Activated T-helper 1 cell treated with anti-CD3 and anti-CD28 coated beads, Interleukin-12 subunit alpha, Interleukin-12 subunit beta, Interleukin-2, Interleukin-4 antibody, amounts not matched to agents 30 ng/mL and 10 ng/mL and 1 ng/mL, durations not matched to agents 14 hours and 24 hours and 36 hours (primary cell): ENCODE measurements at regions of chr10 and their contacts with region 1.

Region 1: DNA sequence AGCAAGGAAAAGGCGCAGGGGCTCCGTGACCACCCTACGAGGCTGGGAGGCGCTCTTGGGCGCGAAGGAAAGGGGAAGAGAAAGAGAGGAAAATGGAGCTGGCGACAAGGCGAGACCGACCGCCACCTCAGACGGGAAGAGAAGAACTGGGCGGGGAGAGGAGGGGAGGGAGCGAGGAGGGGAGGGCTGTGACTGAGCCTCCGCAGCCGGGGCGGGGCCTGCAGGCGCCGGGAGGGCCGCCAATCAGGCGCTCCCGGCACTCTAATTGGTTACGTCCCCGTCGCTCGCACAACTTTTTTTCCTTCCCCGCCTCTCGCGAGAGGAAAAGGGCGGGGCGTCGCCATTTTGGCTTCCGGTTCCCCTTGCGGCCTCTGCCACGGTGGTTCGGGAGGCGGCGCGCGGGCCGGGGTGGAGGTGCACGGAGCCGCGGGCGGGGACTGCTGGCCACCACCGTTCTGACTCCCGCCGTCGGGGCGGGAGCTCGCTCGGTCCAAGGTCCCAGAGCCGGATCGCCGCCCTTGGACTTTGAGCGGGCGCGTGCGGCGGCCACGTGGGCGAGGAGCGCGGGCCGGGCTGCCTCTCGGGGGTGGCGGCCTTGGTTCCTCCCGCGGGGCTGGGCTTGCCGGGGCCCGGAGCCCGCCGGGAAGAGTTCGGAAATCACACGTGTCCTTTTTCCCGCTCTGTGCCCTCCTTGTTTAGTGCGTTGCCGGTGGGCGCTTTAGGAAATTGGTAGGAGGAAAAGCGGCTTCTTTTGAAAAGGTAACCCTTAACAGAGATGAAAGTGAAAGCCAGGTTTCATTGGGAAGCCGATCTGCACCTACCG is at the start of gene GDI2:
- DNase-seq: peak; percentile 97
- H3K4me3 Mint-ChIP-seq: peak within 1 kb of the TSS; percentile 95
- H3K27ac Mint-ChIP-seq: peak within 1 kb of the TSS; percentile 91
- H3K4me1 Mint-ChIP-seq: peaks cover 69% of the 10 kb centered on the region
- H3K27me3 Mint-ChIP-seq: no peaks in the 10 kb centered on the region
- total RNA-seq, gene GDI2: 288 and 290 TPM in 2 replicates

Region 2: GRCh38 chr10:5293691-5294550 is 519.6 kb before region 1 on chr10:
- intact Hi-C with region 1: loop called (anchors 10 kb)
- DNase-seq: peak; percentile 73
- H3K4me3 Mint-ChIP-seq: peak overlapping the region; percentile 93
- H3K27ac Mint-ChIP-seq: peak overlapping the region; percentile 100
- H3K4me1 Mint-ChIP-seq: peaks cover 82% of the 10 kb centered on the region
- H3K27me3 Mint-ChIP-seq: no peaks in the 10 kb centered on the region

Region 3: DNA sequence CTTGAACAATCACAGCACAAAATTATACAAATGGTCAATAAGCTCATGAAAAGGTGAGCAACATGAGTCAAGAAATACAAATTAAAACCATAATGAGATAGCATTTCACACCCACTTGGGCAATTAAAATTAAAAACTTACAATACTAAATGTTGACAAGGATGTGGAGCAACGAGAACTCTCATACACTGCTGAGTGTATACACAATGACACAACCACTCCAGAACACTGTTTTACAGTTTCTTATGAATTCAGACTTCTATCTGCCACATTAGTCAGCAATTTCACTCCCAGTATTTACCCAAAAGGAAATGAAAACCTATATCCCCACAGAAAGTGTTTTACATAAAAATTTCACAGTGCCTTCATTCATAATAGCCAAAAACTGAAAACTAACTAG is 31.3 kb before region 1 on chr10:
- intact Hi-C with region 1: loop called (anchors 2 kb)
- DNase-seq: no peak
- H3K4me3 Mint-ChIP-seq: no peak overlapping the region
- H3K27ac Mint-ChIP-seq: peak overlapping the region; percentile 68
- H3K4me1 Mint-ChIP-seq: peaks cover 43% of the 10 kb centered on the region
- H3K27me3 Mint-ChIP-seq: no peaks in the 10 kb centered on the region

Region 4: GRCh38 chr10:5889624-5890451 is 76.3 kb after region 1 on chr10 and contains the starts of genes ANKRD16 and FBH1:
- intact Hi-C with region 1: loop called (anchors 1 kb)
- DNase-seq: peak; percentile 99
- H3K4me3 Mint-ChIP-seq: peak within 1 kb of the TSS; percentile 91
- H3K27ac Mint-ChIP-seq: peak within 1 kb of the TSS; percentile 76
- H3K4me1 Mint-ChIP-seq: peaks cover 52% of the 10 kb centered on the region
- H3K27me3 Mint-ChIP-seq: no peaks in the 10 kb centered on the region
- total RNA-seq, gene ANKRD16: 11.3 and 12.4 TPM in 2 replicates
- total RNA-seq, gene FBH1: 66.9 and 70.6 TPM in 2 replicates

Region 5: GRCh38 chr10:6050801-6051445 is 237.4 kb after region 1 on chr10:
- intact Hi-C with region 1: loop called (anchors 5 kb)
- DNase-seq: peak; percentile 92
- H3K4me3 Mint-ChIP-seq: peak overlapping the region; percentile 82
- H3K27ac Mint-ChIP-seq: peak overlapping the region; percentile 91
- H3K4me1 Mint-ChIP-seq: peaks cover 89% of the 10 kb centered on the region
- H3K27me3 Mint-ChIP-seq: no peaks in the 10 kb centered on the region

Region 6: DNA sequence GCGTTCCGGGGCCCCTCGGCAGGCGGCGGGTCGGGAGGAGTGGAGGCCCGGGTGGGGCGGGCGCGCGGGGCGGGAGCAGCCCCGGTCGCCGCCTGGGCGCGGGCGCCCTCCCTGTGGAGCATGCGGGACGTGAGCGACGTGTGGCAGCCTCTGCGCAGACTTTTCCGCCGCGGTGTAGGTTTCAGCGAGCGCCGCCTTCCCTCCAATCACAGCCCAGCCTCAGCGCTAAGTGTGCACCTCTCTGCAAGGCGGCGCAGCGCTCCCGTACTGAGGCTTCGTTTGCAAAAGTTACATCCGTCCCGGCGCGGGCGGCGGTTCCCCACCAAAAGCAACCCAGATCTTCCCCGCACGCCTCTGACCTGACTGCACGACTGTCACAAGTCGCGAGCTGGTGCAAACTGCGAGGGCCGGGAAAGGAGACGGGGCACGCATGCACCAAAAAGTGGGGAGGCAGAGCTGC is 388.0 kb after region 1 on chr10:
- intact Hi-C with region 1: no loop called
- DNase-seq: peak; percentile 81
- H3K4me3 Mint-ChIP-seq: peak overlapping the region; percentile 91
- H3K27ac Mint-ChIP-seq: peak overlapping the region; percentile 92
- H3K4me1 Mint-ChIP-seq: peaks cover 40% of the 10 kb centered on the region
- H3K27me3 Mint-ChIP-seq: no peaks in the 10 kb centered on the region

Region 7: DNA sequence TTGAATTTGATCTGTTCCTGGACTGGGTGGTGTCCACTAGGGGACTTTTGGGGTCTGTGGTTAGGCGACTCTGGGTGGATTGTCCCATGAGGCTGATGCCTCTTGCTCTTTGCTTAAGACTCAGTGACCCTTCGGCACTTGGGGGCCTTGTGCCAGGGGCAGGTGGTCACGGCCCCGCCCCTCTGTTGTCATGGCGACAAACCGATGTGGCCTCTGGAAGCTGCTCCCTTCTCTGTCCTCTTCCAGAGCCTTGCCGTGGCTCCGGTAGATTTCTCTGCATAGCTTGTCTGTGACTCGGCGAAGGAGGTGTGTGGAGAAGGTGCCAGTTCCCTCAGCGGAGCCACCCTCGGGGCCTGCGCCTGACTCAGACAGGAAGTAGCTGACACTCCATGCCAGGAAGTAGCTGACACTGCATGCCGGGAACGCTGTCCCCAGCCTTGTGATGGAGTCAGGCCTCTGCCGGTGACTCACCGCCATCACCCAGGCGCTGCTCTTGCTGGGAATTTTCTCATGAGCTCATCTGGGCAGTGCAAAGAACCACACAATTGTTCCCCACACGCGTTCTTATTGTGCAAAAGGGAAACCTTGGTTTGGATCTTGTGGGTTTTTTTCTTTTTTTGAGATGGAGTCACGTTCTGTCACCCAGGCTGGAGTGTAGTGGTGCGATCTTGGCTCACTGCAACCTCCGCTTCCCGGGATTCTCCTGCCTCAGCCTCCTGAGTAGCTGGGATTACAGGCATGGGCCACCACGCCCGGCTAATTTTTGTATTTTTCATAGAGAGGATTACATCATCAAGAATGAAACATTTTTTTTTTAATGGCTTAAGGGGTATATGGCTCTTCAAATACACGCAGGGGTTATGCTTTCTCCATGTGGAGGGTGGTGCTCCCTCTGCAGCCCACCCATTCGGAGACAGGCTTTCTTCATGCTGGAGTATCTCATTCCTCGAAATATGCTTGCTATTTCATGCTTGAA is 461.8 kb after region 1 on chr10:
- intact Hi-C with region 1: loop called (anchors 10 kb)
- DNase-seq: peak; percentile 86
- H3K4me3 Mint-ChIP-seq: peak overlapping the region; percentile 77
- H3K27ac Mint-ChIP-seq: peak overlapping the region; percentile 97
- H3K4me1 Mint-ChIP-seq: peaks cover 78% of the 10 kb centered on the region
- H3K27me3 Mint-ChIP-seq: no peaks in the 10 kb centered on the region